H1 (cell line): ENCODE measurements at regions of chr6 and their contacts with region 1.

Region 1: GRCh38 chr6:118787724-118788423 is 106.1 kb upstream of the ASF1A start:
- DNase-seq: no peak
- H3K4me3 ChIP-seq: no peak overlapping the region
- H3K27ac ChIP-seq: no peak overlapping the region
- H3K4me1 ChIP-seq: peaks cover 0 to 5% (median 0%) of the 10 kb centered on the region in 4 experiments; a peak in 3 of 7 replicates
- H3K27me3 ChIP-seq: no peaks in the 10 kb centered on the region
- CTCF ChIP-seq: no peak
- EP300 ChIP-seq: no peak
- POLR2A ChIP-seq: no peak
- RAD21 ChIP-seq: no peak

Region 2: DNA sequence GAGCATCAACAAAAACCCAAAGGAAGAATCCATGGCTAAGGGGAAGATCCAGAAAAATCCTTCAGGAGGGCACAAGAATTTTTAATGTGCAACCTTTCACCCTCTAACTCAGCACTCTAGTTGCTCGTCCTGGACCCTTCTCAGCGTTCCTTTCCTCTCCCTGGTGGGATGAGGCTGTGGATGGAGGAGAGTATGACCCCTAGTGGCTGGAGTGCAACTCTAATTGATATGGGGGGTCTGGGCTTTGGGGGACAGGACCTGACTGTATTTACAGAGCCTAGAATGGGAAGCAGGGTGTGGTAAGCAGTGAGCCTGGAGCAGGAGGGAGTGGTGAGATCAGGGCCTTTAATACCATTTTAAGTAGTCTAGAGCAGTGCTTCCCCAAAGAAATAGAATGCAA is 52.6 kb before region 1 on chr6:
- CTCF ChIA-PET with region 1: no interaction called
- POLR2A ChIA-PET with region 1: no interaction called
- DNase-seq: peak in 1 of 2 experiments; percentile 62
- H3K4me3 ChIP-seq: no peak overlapping the region
- H3K27ac ChIP-seq: no peak overlapping the region
- H3K4me1 ChIP-seq: peaks cover 0 to 2% (median 0%) of the 10 kb centered on the region in 4 experiments; a peak in 1 of 7 replicates
- H3K27me3 ChIP-seq: no peaks in the 10 kb centered on the region
- CTCF ChIP-seq: peak; percentile 66 to 82 (median 74)
- EP300 ChIP-seq: no peak
- POLR2A ChIP-seq: no peak
- RAD21 ChIP-seq: peak; percentile 68 to 79

Region 3: GRCh38 chr6:118800394-118801071 is 12.7 kb after region 1 on chr6:
- CTCF ChIA-PET with region 1: interaction called, 23 read pairs
- POLR2A ChIA-PET with region 1: interaction called, 5 read pairs
- DNase-seq: peak; percentile 36 to 81
- H3K4me3 ChIP-seq: peak overlapping the region in 1 of 4 experiments; percentile 19; a peak in 1 of 8 replicates
- H3K27ac ChIP-seq: no peak overlapping the region
- H3K4me1 ChIP-seq: no peaks in the 10 kb centered on the region
- H3K27me3 ChIP-seq: no peaks in the 10 kb centered on the region
- CTCF ChIP-seq: peak in 2 of 3 experiments; percentile 74 to 93; a peak in 3 of 4 replicates
- EP300 ChIP-seq: no peak
- POLR2A ChIP-seq: no peak
- RAD21 ChIP-seq: peak; percentile 73 to 80